Adrenal gland (tissue), 19 donors: ENCODE measurements at regions of chr4 and their contacts with region 1.

Region 1: GRCh38 chr4:16289897-16290554 is 63.8 kb upstream of the TAPT1 start:
- DNase-seq: no peak
- H3K4me3 ChIP-seq: peak overlapping the region in 1 of 4 donors; percentile 9
- H3K27ac ChIP-seq: no peak overlapping the region
- H3K4me1 ChIP-seq: peaks cover 7 to 15% of the 10 kb centered on the region in 2 donors
- H3K27me3 ChIP-seq: no peaks in the 10 kb centered on the region
- CTCF ChIP-seq: peak; percentile 47 to 74 (median 62)
- POLR2A ChIP-seq: no peak

Region 2: GRCh38 chr4:15893962-15894361 is 396.1 kb before region 1 on chr4:
- intact Hi-C with region 1: no loop called
- DNase-seq: no peak
- H3K4me3 ChIP-seq: no peak overlapping the region
- H3K27ac ChIP-seq: no peak overlapping the region
- H3K4me1 ChIP-seq: no peaks in the 10 kb centered on the region
- H3K27me3 ChIP-seq: no peaks in the 10 kb centered on the region
- CTCF ChIP-seq: no peak
- POLR2A ChIP-seq: no peak

Region 3: DNA sequence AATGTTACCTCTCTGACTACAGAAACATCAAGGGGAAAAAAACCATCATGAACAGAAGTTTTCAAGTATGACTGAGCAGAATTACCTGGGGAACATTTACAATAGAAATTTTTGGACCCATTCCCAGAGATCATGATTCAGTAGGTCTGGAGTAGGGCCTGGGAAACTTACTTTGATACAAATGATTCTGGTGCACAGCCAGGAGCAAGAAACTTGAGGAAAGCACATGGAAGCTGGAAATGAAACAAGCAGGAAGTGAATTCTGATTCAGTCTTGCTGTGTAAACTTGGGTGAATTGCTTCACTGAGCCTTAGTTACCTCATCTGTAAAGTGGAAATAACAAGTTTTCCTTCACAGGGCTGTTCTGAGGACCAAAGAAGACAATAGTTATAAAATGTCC is 128.8 kb after region 1 on chr4:
- intact Hi-C with region 1: no loop called
- DNase-seq: peak in 1 of 7 donors; percentile 7
- H3K4me3 ChIP-seq: no peak overlapping the region
- H3K27ac ChIP-seq: no peak overlapping the region
- H3K4me1 ChIP-seq: no peaks in the 10 kb centered on the region
- H3K27me3 ChIP-seq: no peaks in the 10 kb centered on the region
- CTCF ChIP-seq: no peak
- POLR2A ChIP-seq: no peak

Region 4: GRCh38 chr4:16443504-16444088 is 153.6 kb after region 1 on chr4:
- intact Hi-C with region 1: loop called (anchors 5 to 10 kb)
- DNase-seq: peak in 1 of 7 donors; percentile 14
- H3K4me3 ChIP-seq: no peak overlapping the region
- H3K27ac ChIP-seq: no peak overlapping the region
- H3K4me1 ChIP-seq: no peaks in the 10 kb centered on the region
- H3K27me3 ChIP-seq: no peaks in the 10 kb centered on the region
- CTCF ChIP-seq: peak; percentile 43 to 75 (median 62)
- POLR2A ChIP-seq: no peak